Activated naive CD4-positive, alpha-beta T cell treated with anti-CD3 and anti-CD28 coated beads for 36 hours (primary cell): ENCODE measurements at regions of chr7 and their contacts with region 1.

Region 1: GRCh38 chr7:106285051-106285854 is 470 bp upstream of the NAMPT start:
- DNase-seq: peak; percentile 100
- H3K4me3 Mint-ChIP-seq: peak overlapping the region; percentile 92
- H3K27ac Mint-ChIP-seq: peak overlapping the region; percentile 99
- H3K4me1 Mint-ChIP-seq: peaks cover 45% of the 10 kb centered on the region
- H3K27me3 Mint-ChIP-seq: peaks cover under 1% of the 10 kb centered on the region

Region 2: DNA sequence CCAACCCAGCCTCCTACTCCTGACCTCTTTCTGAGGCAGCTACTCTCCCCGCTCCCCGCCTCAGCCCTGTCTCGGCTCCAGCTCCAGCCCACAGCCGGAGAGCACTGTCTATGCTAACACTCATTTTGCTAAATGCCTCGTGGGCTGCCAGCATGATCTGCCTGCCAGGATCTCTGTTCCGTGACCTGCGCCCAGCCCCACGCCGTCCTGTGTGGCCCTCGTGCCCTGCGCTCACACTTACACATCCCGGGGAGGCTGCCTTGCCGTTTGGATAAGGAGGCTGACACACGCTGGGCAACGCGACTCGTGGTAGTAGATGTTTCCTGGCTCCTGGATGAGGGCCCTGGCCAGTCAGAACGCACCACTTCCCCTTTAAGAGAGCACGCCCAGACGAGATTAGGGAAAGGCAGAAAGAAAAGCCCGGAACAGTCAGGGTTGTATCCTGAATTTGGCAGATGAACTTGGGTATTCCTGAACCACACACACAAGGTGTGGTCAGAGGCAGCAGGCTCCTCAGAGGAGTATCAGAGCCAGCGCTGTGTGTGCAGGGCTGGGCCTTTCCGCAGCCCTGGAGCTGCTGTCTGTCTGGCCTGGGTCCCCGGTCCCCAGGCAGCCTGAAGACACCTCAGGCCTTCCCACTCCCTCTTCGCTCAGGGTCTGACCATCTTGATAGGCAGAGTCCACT is 606.3 kb before region 1 on chr7:
- CTCF ChIA-PET with region 1: no interaction called
- intact Hi-C with region 1: loop called (anchors 10 kb)
- DNase-seq: peak; percentile 60
- H3K4me3 Mint-ChIP-seq: peak overlapping the region; percentile 82
- H3K27ac Mint-ChIP-seq: peak overlapping the region; percentile 86
- H3K4me1 Mint-ChIP-seq: peaks cover 59% of the 10 kb centered on the region
- H3K27me3 Mint-ChIP-seq: no peaks in the 10 kb centered on the region

Region 3: GRCh38 chr7:106089647-106090046 is 195.6 kb before region 1 on chr7:
- CTCF ChIA-PET with region 1: no interaction called
- intact Hi-C with region 1: no loop called
- DNase-seq: no peak
- H3K4me3 Mint-ChIP-seq: no peak overlapping the region
- H3K27ac Mint-ChIP-seq: no peak overlapping the region
- H3K4me1 Mint-ChIP-seq: peaks cover 9% of the 10 kb centered on the region
- H3K27me3 Mint-ChIP-seq: no peaks in the 10 kb centered on the region

Region 4: DNA sequence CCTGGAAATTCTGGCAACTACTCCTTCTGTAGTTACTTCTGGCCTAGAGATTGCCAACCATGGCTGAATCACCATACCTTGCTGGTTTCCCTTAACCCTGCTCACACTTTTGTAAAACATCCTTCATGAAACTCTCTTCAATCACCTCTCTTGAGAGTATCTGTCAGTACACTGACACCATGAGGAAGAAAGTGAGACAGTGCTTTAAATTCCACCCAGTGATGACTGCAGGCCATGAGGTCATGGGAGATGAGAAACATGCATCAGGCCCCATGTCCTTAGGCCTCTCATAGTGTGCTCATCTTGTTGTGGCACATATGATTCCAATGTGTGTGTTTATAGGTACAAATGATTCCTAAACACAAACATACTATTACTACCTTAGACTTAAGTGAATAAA is 24.1 kb after region 1 on chr7:
- CTCF ChIA-PET with region 1: no interaction called
- intact Hi-C with region 1: loop called (anchors 1 kb)
- DNase-seq: peak; percentile 66
- H3K4me3 Mint-ChIP-seq: no peak overlapping the region
- H3K27ac Mint-ChIP-seq: no peak overlapping the region
- H3K4me1 Mint-ChIP-seq: peaks cover 24% of the 10 kb centered on the region
- H3K27me3 Mint-ChIP-seq: peaks cover 11% of the 10 kb centered on the region

Region 5: GRCh38 chr7:106384371-106384770 is 99.1 kb after region 1 on chr7:
- CTCF ChIA-PET with region 1: no interaction called
- intact Hi-C with region 1: no loop called
- DNase-seq: no peak
- H3K4me3 Mint-ChIP-seq: no peak overlapping the region
- H3K27ac Mint-ChIP-seq: no peak overlapping the region
- H3K4me1 Mint-ChIP-seq: no peaks in the 10 kb centered on the region
- H3K27me3 Mint-ChIP-seq: peaks cover 13% of the 10 kb centered on the region

Region 6: DNA sequence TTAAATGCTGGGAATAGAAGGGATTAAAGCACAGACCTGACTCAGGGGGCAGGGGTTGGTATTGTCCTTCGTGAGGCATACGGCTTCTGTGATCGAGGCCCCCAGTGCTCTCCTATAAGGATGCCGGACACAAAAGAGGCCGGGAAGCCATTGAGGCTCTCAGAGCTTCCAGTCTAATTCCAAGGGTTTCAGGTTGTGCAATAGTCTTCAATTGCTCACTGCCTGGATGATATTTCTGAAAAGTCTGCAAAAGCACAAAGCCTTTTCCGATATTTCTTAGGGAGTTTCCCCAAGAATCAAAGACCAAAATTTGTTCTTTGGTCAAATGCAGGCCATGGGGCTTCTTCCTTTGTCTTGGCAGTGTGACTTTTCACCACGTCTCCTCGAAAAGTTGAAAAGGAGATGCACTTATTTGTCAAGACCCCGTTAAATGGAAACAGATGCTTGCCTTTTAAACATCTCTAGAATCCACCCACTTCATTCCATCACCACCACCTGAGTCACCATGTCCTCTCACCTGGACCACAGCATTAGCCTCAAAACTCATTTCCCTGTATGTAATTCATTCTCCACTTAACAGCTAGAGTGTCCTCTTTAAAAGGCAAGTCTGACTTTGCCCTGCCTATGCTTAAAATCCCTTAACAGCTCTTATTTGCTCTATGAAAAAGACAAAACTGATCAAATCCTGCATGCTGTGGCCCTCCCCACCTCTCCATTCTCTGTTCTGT is 134.4 kb after region 1 on chr7:
- CTCF ChIA-PET with region 1: interaction called, 4 read pairs
- intact Hi-C with region 1: loop called (anchors 1 kb)
- DNase-seq: peak; percentile 70
- H3K4me3 Mint-ChIP-seq: no peak overlapping the region
- H3K27ac Mint-ChIP-seq: peak overlapping the region; percentile 80
- H3K4me1 Mint-ChIP-seq: peaks cover 72% of the 10 kb centered on the region
- H3K27me3 Mint-ChIP-seq: peaks cover 17% of the 10 kb centered on the region

Region 7: GRCh38 chr7:106659963-106660861 is 375.0 kb after region 1 on chr7:
- CTCF ChIA-PET with region 1: no interaction called
- intact Hi-C with region 1: loop called (anchors 2 kb)
- DNase-seq: peak; percentile 87
- H3K4me3 Mint-ChIP-seq: peak overlapping the region; percentile 87
- H3K27ac Mint-ChIP-seq: peak overlapping the region; percentile 95
- H3K4me1 Mint-ChIP-seq: peaks cover 23% of the 10 kb centered on the region
- H3K27me3 Mint-ChIP-seq: no peaks in the 10 kb centered on the region

Region 8: DNA sequence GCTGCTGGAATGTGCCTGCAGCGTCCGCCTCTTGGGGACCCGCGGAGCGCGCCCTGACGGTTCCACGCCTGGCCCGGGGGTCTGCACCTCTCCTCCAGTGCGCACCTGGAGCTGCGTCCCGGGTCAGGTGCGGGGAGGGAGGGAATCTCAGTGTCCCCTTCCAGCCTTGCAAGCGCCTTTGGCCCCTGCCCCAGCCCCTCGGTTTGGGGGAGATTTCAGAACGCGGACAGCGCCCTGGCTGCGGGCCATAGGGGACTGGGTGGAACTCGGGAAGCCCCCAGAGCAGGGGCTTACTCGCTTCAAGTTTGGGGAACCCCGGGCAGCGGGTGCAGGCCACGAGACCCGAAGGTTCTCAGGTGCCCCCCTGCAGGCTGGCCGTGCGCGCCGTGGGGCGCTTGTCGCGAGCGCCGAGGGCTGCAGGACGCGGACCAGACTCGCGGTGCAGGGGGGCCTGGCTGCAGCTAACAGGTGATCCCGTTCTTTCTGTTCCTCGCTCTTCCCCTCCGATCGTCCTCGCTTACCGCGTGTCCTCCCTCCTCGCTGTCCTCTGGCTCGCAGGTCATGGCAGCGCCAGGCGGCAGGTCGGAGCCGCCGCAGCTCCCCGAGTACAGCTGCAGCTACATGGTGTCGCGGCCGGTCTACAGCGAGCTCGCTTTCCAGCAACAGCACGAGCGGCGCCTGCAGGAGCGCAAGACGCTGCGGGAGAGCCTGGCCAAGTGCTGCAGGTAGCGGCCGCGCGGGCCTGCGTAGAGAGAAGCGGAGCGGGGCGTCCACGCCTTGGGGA is 1376.0 kb after region 1 on chr7:
- CTCF ChIA-PET with region 1: no interaction called
- intact Hi-C with region 1: loop called (anchors 1 kb)
- DNase-seq: peak; percentile 69
- H3K4me3 Mint-ChIP-seq: peak overlapping the region; percentile 86
- H3K27ac Mint-ChIP-seq: no peak overlapping the region
- H3K4me1 Mint-ChIP-seq: peaks cover 26% of the 10 kb centered on the region
- H3K27me3 Mint-ChIP-seq: peaks cover 31% of the 10 kb centered on the region